Heart right ventricle (tissue), 16 donors: ENCODE measurements at regions of chr6 and their contacts with region 1.

Region 1: GRCh38 chr6:156564127-156564806 is 212.9 kb upstream of the ARID1B start:
- DNase-seq: peak; percentile 77 to 81
- ATAC-seq: peak; percentile 94 to 98 (median 96)
- H3K4me3 ChIP-seq: no peak overlapping the region
- H3K27ac ChIP-seq: peak overlapping the region in 1 of 10 donors; percentile 35
- H3K4me1 ChIP-seq: peaks cover 0 to 11% (median 5%) of the 10 kb centered on the region in 9 donors
- H3K27me3 ChIP-seq: no peaks in the 10 kb centered on the region
- CTCF ChIP-seq: peak; percentile 92 to 99 (median 96)

Region 2: DNA sequence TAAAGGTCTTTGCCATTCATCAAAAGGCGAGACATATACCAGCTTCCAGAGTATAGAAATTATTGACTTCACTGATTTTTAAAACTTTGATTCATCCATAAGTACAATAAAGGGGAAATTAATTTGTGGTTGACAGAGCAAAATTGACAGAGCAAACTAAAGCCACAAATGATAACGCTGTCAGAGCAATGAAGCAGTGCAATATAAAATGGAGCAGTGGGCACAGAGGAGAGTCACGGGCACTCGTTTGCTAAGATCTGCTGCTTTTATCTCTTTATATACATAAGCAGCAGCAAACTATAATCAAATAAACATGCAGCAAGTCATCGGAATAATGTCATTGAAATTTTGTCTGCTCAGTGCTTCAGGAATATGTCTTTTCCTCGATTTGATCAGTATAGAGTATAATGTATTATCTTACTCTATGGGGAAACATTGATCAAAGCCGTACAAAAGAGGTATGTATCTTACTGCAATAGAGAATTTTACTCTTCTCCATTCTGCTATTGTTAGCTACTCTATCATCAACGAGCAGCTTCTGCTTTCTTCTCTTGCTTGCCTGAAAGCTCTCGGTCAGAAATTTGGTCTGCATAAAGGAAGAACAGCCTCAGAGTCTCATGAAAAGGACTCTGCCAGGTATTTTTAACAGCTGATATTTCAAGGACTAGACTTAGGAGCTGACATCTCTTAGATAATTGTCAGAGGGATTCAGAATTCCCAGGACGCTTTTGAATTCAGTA is 333.1 kb before region 1 on chr6:
- intact Hi-C with region 1: no loop called
- DNase-seq: no peak
- ATAC-seq: no peak
- H3K4me3 ChIP-seq: no peak overlapping the region
- H3K27ac ChIP-seq: no peak overlapping the region
- H3K4me1 ChIP-seq: no peaks in the 10 kb centered on the region
- H3K27me3 ChIP-seq: no peaks in the 10 kb centered on the region
- CTCF ChIP-seq: no peak

Region 3: GRCh38 chr6:156686995-156687788 is 122.9 kb after region 1 on chr6:
- intact Hi-C with region 1: loop called in 8 of 10 experiments (anchors 1 to 10 kb)
- DNase-seq: peak; percentile 90 to 91
- ATAC-seq: peak; percentile 95 to 99 (median 96)
- H3K4me3 ChIP-seq: peak overlapping the region; percentile 59 to 94 (median 72)
- H3K27ac ChIP-seq: peak overlapping the region; percentile 87 to 100 (median 98)
- H3K4me1 ChIP-seq: peaks cover 0 to 19% (median 11%) of the 10 kb centered on the region in 9 donors
- H3K27me3 ChIP-seq: no peaks in the 10 kb centered on the region
- CTCF ChIP-seq: no peak

Region 4: GRCh38 chr6:156760377-156760776 is 196.1 kb after region 1 on chr6:
- intact Hi-C with region 1: loop called in 3 of 10 experiments (anchors 5 to 10 kb)
- DNase-seq: no peak
- ATAC-seq: no peak
- H3K4me3 ChIP-seq: no peak overlapping the region
- H3K27ac ChIP-seq: no peak overlapping the region
- H3K4me1 ChIP-seq: no peaks in the 10 kb centered on the region
- H3K27me3 ChIP-seq: no peaks in the 10 kb centered on the region
- CTCF ChIP-seq: no peak

Region 5: DNA sequence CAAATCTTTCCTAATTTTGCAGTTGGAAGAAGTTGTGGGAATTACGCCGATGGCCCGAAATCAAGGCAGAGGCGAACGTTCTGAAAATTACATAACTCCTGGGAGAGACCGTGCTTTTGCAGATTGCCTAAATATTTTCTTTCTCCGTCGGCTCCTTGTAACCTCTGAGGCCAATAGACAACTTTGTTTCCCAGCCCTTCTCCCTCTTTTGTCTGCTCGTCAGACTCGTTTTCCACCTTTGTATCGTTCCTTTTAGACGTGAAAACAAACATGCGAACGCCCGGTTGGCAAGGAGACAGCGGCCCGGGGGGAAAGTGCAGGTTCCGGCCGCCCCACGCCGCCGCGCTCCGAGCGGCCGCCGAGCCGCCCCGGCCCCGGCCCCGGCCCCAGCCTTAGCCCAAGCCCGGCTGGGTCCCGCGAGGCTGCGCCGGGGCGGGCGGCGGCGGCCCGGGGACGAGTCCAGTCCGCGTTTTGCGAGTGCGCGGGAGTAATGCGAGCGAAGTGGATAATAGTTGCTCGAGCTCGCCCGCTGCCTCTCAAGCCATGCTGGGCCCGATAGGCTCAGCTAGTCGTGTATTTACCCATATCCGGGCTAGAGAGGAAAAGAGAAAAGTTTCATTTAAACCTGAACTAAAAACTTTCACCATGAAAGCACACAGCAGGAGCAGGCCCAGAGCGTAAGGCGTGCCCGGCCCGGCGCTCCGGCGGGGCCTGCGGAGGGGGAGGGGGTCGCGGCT is 212.7 kb after region 1 on chr6 and contains the start of gene ARID1B:
- intact Hi-C with region 1: loop called in 8 of 10 experiments (anchors 5 to 10 kb)
- DNase-seq: peak; percentile 84 to 87
- ATAC-seq: peak; percentile 69 to 83 (median 80)
- H3K4me3 ChIP-seq: peak within 1 kb of the TSS; percentile 67 to 87 (median 78)
- H3K27ac ChIP-seq: peak within 1 kb of the TSS; percentile 96 to 99 (median 98)
- H3K4me1 ChIP-seq: peaks cover 0 to 43% (median 36%) of the 10 kb centered on the region in 9 donors
- H3K27me3 ChIP-seq: no peaks in the 10 kb centered on the region
- CTCF ChIP-seq: no peak
- total RNA-seq, gene ARID1B: 39.0 to 63.2 (median 53.0) TPM

Region 6: GRCh38 chr6:157021344-157021992 is 457.2 kb after region 1 on chr6:
- intact Hi-C with region 1: loop called in 5 of 10 experiments (anchors 5 to 10 kb)
- DNase-seq: peak; percentile 91 to 92
- ATAC-seq: peak; percentile 93 to 96 (median 94)
- H3K4me3 ChIP-seq: peak overlapping the region; percentile 59 to 88 (median 78)
- H3K27ac ChIP-seq: peak overlapping the region; percentile 94 to 100 (median 98)
- H3K4me1 ChIP-seq: peaks cover 0 to 63% (median 47%) of the 10 kb centered on the region in 9 donors
- H3K27me3 ChIP-seq: no peaks in the 10 kb centered on the region
- CTCF ChIP-seq: peak in 8 of 9 donors; percentile 29 to 71 (median 48)

Region 7: DNA sequence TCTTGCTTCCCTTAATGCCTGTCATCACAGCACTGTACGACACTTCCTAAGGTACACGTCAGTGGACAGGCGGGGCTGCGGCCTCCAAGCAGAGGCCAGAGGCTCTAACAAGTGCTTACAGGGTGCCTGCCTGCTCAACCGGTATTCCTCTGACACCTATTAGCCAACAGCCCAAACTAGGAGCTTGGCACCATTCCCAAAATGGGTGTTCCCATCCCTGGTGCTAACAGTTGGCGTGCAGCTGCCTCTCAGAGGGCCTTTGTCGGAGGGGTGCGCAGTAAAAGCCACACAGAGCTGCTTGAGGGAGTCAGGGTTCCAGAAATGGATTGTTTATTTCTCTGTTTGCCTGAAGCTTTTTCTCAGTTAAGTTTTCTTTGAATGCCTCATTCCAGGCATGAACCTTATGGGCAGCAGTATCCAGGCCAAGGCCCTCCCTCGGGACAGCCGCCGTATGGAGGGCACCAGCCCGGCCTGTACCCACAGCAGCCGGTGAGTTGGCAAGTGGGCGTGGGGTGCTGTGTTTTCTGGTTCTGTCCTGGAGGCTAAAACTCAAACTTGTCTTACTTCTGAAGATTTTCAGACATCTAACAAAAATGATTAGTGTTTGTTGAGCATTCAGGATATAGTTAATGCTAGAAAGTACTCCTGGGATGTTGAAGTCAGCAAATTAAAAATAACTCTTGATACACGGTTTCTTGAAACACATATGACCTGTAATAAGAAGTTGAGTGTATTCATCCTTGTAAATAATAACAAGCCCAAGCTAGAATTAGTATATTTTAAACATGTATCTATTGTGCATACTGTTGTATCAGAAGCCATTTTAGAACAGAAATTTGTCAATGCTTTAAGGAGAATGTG is 634.4 kb after region 1 on chr6:
- intact Hi-C with region 1: loop called in 1 of 10 experiments (anchors 10 kb)
- DNase-seq: peak; percentile 41 to 77
- ATAC-seq: peak; percentile 65 to 94 (median 86)
- H3K4me3 ChIP-seq: peak overlapping the region in 4 of 10 donors; percentile 6 to 22 (median 14)
- H3K27ac ChIP-seq: peak overlapping the region in 8 of 10 donors; percentile 34 to 72 (median 59)
- H3K4me1 ChIP-seq: peaks cover 0 to 17% (median 10%) of the 10 kb centered on the region in 9 donors
- H3K27me3 ChIP-seq: no peaks in the 10 kb centered on the region
- CTCF ChIP-seq: no peak